MCF 10A (cell line): ENCODE measurements at regions of chr15 and their contacts with region 1.

Region 1: GRCh38 chr15:44426975-44427755 is at the start of gene CTDSPL2:
- DNase-seq: peak; percentile 99
- H3K4me3 Mint-ChIP-seq: peak within 1 kb of the TSS; percentile 97
- H3K27ac Mint-ChIP-seq: peak within 1 kb of the TSS; percentile 99
- H3K4me1 Mint-ChIP-seq: peaks cover 6% of the 10 kb centered on the region
- H3K27me3 Mint-ChIP-seq: no peaks in the 10 kb centered on the region
- CTCF ChIP-seq: peak; percentile 15
- total RNA-seq, gene CTDSPL2: 36.3 and 38.2 TPM in 2 replicates

Region 2: GRCh38 chr15:44296625-44297524 is 130.3 kb before region 1 on chr15:
- CTCF ChIA-PET with region 1: interaction called, 4 read pairs
- POLR2A ChIA-PET with region 1: interaction called, 122 read pairs
- intact Hi-C with region 1: no loop called
- DNase-seq: peak; percentile 81
- H3K4me3 Mint-ChIP-seq: peak overlapping the region; percentile 32
- H3K27ac Mint-ChIP-seq: peak overlapping the region; percentile 91
- H3K4me1 Mint-ChIP-seq: peaks cover 38% of the 10 kb centered on the region
- H3K27me3 Mint-ChIP-seq: no peaks in the 10 kb centered on the region
- CTCF ChIP-seq: no peak

Region 3: DNA sequence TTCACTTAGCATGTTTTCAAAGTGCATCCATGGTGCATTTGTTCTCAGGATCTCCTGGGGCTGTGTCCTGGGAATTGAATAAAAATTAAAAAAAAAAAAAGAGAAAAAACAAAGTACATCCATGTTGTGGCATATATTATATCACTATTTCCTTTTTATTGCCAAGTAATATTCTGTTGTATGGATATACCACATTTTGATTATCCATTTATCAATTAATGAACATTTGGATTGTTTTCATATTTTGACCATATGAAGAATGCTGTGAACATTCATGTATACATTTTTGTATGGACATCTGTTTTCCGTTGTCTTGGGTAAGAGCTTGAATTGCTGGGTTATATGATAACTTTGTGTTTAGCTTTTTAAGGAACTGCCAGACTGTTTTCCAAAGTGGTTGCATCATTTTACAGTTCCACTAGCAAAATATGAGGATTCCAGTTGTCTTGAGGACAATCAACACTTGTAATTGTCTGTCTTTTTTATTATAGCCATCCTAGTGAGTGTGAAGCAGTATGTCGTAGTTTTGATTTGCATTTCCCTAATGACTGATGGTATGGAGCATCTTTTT is 44.8 kb after region 1 on chr15:
- CTCF ChIA-PET with region 1: interaction called, 3 read pairs
- POLR2A ChIA-PET with region 1: interaction called, 10 read pairs
- intact Hi-C with region 1: no loop called
- DNase-seq: no peak
- H3K4me3 Mint-ChIP-seq: no peak overlapping the region
- H3K27ac Mint-ChIP-seq: no peak overlapping the region
- H3K4me1 Mint-ChIP-seq: peaks cover 9% of the 10 kb centered on the region
- H3K27me3 Mint-ChIP-seq: no peaks in the 10 kb centered on the region
- CTCF ChIP-seq: no peak

Region 4: DNA sequence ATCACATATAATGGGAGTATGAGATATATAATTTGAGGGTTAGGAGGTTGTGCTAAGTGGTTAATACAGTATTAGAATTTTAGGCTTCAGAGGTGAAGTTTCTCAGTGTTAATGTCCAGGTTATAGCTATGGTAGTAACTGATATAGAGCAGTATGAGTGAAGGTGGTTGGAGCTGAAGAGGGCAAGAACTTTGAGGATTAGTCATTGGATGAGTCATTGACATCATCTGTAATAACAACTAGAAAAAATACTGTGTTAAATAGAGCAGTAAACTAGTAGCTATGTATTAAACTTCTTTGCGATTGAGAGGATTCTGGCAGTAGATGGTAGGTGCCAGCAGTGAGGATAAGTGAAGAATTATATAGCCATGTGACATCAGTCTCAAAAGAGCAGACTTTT is 62.3 kb after region 1 on chr15:
- CTCF ChIA-PET with region 1: interaction called, 5 read pairs
- POLR2A ChIA-PET with region 1: interaction called, 23 read pairs
- intact Hi-C with region 1: loop called (anchors 5 kb)
- DNase-seq: peak; percentile 70
- H3K4me3 Mint-ChIP-seq: no peak overlapping the region
- H3K27ac Mint-ChIP-seq: peak overlapping the region; percentile 36
- H3K4me1 Mint-ChIP-seq: peaks cover 27% of the 10 kb centered on the region
- H3K27me3 Mint-ChIP-seq: no peaks in the 10 kb centered on the region
- CTCF ChIP-seq: no peak

Region 5: GRCh38 chr15:44536962-44537734 is 110.0 kb after region 1 on chr15 and contains the start of gene EIF3J:
- CTCF ChIA-PET with region 1: interaction called, 3 read pairs
- POLR2A ChIA-PET with region 1: interaction called, 36 read pairs
- intact Hi-C with region 1: no loop called
- DNase-seq: peak; percentile 96
- H3K4me3 Mint-ChIP-seq: peak within 1 kb of the TSS; percentile 82
- H3K27ac Mint-ChIP-seq: peak within 1 kb of the TSS; percentile 97
- H3K4me1 Mint-ChIP-seq: peaks cover 34% of the 10 kb centered on the region
- H3K27me3 Mint-ChIP-seq: no peaks in the 10 kb centered on the region
- CTCF ChIP-seq: no peak
- total RNA-seq, gene EIF3J: 165 and 213 TPM in 2 replicates

Region 6: DNA sequence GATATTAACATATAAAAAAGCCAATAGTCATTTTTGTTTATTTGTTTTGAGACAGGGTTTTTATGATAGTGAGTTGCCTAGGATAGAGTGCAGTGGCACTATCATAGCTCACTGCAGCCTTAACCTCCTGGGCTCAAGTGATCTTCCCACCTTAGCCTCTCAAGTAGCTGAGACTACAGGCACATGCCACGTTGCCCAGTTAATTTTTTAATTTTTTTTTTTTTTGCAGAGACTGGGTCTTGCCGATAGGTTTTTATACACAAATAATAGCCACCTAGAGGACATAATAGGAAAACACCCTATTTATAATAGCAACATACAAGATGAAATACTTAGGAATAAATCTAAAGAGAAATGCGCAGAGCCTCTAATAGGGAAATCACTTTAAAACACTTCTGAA is 123.1 kb after region 1 on chr15:
- CTCF ChIA-PET with region 1: no interaction called
- POLR2A ChIA-PET with region 1: no interaction called
- intact Hi-C with region 1: no loop called
- DNase-seq: peak; percentile 33
- H3K4me3 Mint-ChIP-seq: no peak overlapping the region
- H3K27ac Mint-ChIP-seq: no peak overlapping the region
- H3K4me1 Mint-ChIP-seq: peaks cover 7% of the 10 kb centered on the region
- H3K27me3 Mint-ChIP-seq: no peaks in the 10 kb centered on the region
- CTCF ChIP-seq: peak; percentile 17